Panc1 (cell line): ENCODE measurements at regions of chr2 and their contacts with region 1.

Region 1: GRCh38 chr2:27714053-27714452 is 50.4 kb downstream of the SLC4A1AP start:
- DNase-seq: no peak
- ATAC-seq: no peak
- H3K4me3 ChIP-seq: 0 out of 4 replicates have a peak overlapping the region, but pooled peaks of 1 of the 2 experiments have one; percentile 9
- H3K27ac ChIP-seq: no peak overlapping the region
- H3K4me1 ChIP-seq: peaks cover 18% of the 10 kb centered on the region
- H3K27me3 ChIP-seq: no peaks in the 10 kb centered on the region
- CTCF ChIP-seq: no peak

Region 2: DNA sequence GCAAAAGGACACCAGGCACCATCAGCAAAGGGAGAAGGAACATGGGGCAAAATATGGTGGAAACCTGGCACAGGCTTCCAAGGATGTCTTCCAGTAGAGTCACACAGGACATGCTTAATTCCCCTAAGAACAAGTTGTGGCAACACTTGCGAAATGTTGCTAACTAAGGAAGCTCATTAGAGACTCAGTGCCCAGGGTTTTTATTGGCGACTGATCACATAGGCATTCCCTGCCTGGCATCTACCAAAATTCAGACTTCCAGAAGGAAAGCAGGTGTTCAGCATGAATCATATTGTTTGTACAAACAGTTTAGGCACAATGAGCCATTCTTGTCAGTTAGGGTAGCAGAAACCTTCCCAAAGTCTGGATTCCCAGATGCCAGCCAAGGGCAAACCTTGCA is 24.6 kb before region 1 on chr2:
- CTCF ChIA-PET with region 1: interaction called, 12 read pairs
- POLR2A ChIA-PET with region 1: no interaction called
- in situ Hi-C with region 1: no loop called
- intact Hi-C with region 1: no loop called
- DNase-seq: no peak
- ATAC-seq: no peak
- H3K4me3 ChIP-seq: no peak overlapping the region
- H3K27ac ChIP-seq: no peak overlapping the region
- H3K4me1 ChIP-seq: no peaks in the 10 kb centered on the region
- H3K27me3 ChIP-seq: no peaks in the 10 kb centered on the region
- CTCF ChIP-seq: no peak

Region 3: GRCh38 chr2:28423856-28424605 is 710.0 kb after region 1 on chr2:
- CTCF ChIA-PET with region 1: no interaction called
- POLR2A ChIA-PET with region 1: interaction called, 10 read pairs
- in situ Hi-C with region 1: no loop called
- intact Hi-C with region 1: no loop called
- DNase-seq: no peak
- ATAC-seq: 0 out of 2 replicates have a peak, but pooled peaks have one; percentile 18
- H3K4me3 ChIP-seq: no peak overlapping the region
- H3K27ac ChIP-seq: no peak overlapping the region
- H3K4me1 ChIP-seq: no peaks in the 10 kb centered on the region
- H3K27me3 ChIP-seq: no peaks in the 10 kb centered on the region
- CTCF ChIP-seq: no peak